Activated naive CD4-positive, alpha-beta T cell treated with anti-CD3 and anti-CD28 coated beads for 36 hours (primary cell): ENCODE measurements at regions of chr2 and their contacts with region 1.

Region 1: GRCh38 chr2:204051476-204051875 is 114.9 kb downstream of the ICOS start:
- DNase-seq: no peak
- H3K4me3 Mint-ChIP-seq: no peak overlapping the region
- H3K27ac Mint-ChIP-seq: no peak overlapping the region
- H3K4me1 Mint-ChIP-seq: peaks cover 17% of the 10 kb centered on the region
- H3K27me3 Mint-ChIP-seq: no peaks in the 10 kb centered on the region

Region 2: GRCh38 chr2:203914546-203915182 is 136.8 kb before region 1 on chr2:
- CTCF ChIA-PET with region 1: no interaction called
- intact Hi-C with region 1: no loop called
- DNase-seq: no peak
- H3K4me3 Mint-ChIP-seq: no peak overlapping the region
- H3K27ac Mint-ChIP-seq: no peak overlapping the region
- H3K4me1 Mint-ChIP-seq: peaks cover 29% of the 10 kb centered on the region
- H3K27me3 Mint-ChIP-seq: no peaks in the 10 kb centered on the region

Region 3: GRCh38 chr2:203928849-203929248 is 122.6 kb before region 1 on chr2:
- CTCF ChIA-PET with region 1: interaction called, 11 read pairs
- intact Hi-C with region 1: loop called (anchors 1 kb)
- DNase-seq: no peak
- H3K4me3 Mint-ChIP-seq: no peak overlapping the region
- H3K27ac Mint-ChIP-seq: no peak overlapping the region
- H3K4me1 Mint-ChIP-seq: peaks cover 43% of the 10 kb centered on the region
- H3K27me3 Mint-ChIP-seq: no peaks in the 10 kb centered on the region

Region 4: GRCh38 chr2:204039298-204039838 is 12.1 kb before region 1 on chr2:
- CTCF ChIA-PET with region 1: interaction called, 12 read pairs
- intact Hi-C with region 1: no loop called
- DNase-seq: no peak
- H3K4me3 Mint-ChIP-seq: no peak overlapping the region
- H3K27ac Mint-ChIP-seq: no peak overlapping the region
- H3K4me1 Mint-ChIP-seq: peaks cover under 1% of the 10 kb centered on the region
- H3K27me3 Mint-ChIP-seq: peaks cover 5% of the 10 kb centered on the region

Region 5: DNA sequence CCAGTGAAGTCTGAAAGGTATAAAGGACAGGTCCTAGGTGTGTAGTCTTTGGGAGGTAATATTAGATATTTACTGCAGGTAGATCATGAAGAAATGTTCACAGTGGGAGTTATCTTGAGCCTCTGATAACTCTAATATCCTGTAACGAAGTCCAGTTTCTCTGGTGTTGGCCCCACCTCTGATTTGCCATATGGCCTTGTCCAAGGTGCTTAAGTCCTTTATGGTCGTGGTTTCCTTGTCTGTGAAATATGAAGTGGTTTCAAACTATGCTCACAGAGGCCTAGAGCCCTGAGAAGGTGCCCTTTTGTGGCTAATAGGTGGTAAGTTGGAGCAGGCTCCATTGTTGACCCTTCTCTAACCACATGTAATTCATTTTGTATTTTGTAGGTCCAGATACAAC is 75.8 kb after region 1 on chr2:
- CTCF ChIA-PET with region 1: no interaction called
- intact Hi-C with region 1: no loop called
- DNase-seq: no peak
- H3K4me3 Mint-ChIP-seq: no peak overlapping the region
- H3K27ac Mint-ChIP-seq: no peak overlapping the region
- H3K4me1 Mint-ChIP-seq: peaks cover 13% of the 10 kb centered on the region
- H3K27me3 Mint-ChIP-seq: peaks cover 11% of the 10 kb centered on the region